ENCODE measurements at regions of chr3 and their contacts with region 1.

Region 1: DNA sequence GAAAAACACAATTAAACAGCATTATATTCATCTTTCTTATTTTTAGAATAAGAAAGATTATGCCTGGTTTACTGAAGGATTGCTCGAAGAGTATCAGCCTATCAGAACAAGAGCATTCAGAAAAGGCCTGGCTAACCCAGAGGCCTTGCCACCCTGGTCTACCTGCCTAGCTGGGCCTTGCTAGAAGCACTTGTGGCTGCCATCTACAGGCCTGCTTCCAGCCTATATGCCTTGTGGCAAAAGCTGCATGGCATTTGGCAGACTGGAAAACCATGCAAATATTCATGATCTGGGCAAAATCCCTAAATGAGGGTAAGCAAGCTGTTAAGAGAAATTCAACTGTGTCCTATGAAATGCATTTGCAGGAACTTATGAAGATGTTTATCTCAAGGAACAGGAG is 9.3 kb upstream of the ATP13A4 start:
- DNase-seq: peak; percentile 50
- H3K4me3 ChIP-seq: no peak overlapping the region
- H3K27ac ChIP-seq: no peak overlapping the region
- H3K4me1 ChIP-seq: no peaks in the 10 kb centered on the region
- H3K27me3 ChIP-seq: no peaks in the 10 kb centered on the region
- CTCF ChIP-seq: peak in 4 of 5 experiments; percentile 7 to 44 (median 24)
- EP300 ChIP-seq: no peak
- POLR2A ChIP-seq: no peak

Region 2: DNA sequence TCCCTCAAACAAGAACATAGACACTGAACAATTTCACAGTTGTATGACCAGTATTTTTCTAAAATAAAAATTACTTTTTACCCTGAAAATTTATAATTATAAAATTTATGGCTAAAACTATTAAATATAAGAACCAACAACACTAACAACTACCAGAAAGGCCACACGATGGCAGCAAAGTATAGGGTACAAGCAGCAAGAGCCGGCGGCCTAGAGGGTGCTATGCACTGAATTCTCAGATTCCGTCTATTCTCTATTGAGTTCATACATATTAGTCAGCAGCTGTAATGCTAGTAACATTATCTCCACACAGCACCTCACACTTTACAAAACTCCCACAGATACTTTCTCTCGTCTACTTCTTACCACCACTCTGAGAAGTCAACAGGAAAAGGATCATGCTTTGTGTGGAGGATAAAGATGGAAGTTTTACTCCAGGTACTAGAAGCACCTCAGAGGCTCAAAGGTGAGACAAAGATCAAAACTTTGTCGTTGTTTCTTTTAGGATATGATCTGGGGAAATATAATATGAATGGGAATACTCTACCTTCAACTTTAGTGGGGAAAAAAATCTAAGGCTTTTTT is 997.2 kb before region 1 on chr3:
- in situ Hi-C with region 1: loop called in 2 of 4 experiments (anchors 10 to 25 kb)
- intact Hi-C with region 1: no loop called
- DNase-seq: peak; percentile 54
- H3K4me3 ChIP-seq: no peak overlapping the region
- H3K27ac ChIP-seq: no peak overlapping the region
- H3K4me1 ChIP-seq: no peaks in the 10 kb centered on the region
- H3K27me3 ChIP-seq: no peaks in the 10 kb centered on the region
- CTCF ChIP-seq: peak; percentile 45 to 67 (median 61)
- EP300 ChIP-seq: no peak
- POLR2A ChIP-seq: no peak

Region 3: GRCh38 chr3:192816351-192816750 is 747.7 kb before region 1 on chr3:
- in situ Hi-C with region 1: loop called in 2 of 4 experiments (anchors 10 to 25 kb)
- intact Hi-C with region 1: no loop called
- DNase-seq: no peak
- H3K4me3 ChIP-seq: no peak overlapping the region
- H3K27ac ChIP-seq: no peak overlapping the region
- H3K4me1 ChIP-seq: peaks cover 0 to 12% (median 2%) of the 10 kb centered on the region in 4 donors
- H3K27me3 ChIP-seq: no peaks in the 10 kb centered on the region
- CTCF ChIP-seq: peak; percentile 61 to 79 (median 71)
- EP300 ChIP-seq: no peak
- POLR2A ChIP-seq: no peak

Region 4: GRCh38 chr3:193457526-193457925 is 106.5 kb before region 1 on chr3:
- in situ Hi-C with region 1: loop called in 3 of 4 experiments (anchors 5 to 25 kb)
- intact Hi-C with region 1: no loop called
- DNase-seq: no peak
- H3K4me3 ChIP-seq: no peak overlapping the region
- H3K27ac ChIP-seq: no peak overlapping the region
- H3K4me1 ChIP-seq: peaks cover 0 to 6% (median 0%) of the 10 kb centered on the region in 4 donors
- H3K27me3 ChIP-seq: no peaks in the 10 kb centered on the region
- CTCF ChIP-seq: no peak
- EP300 ChIP-seq: no peak
- POLR2A ChIP-seq: no peak